ENCODE measurements at regions of chr3 and their contacts with region 1.

Region 1: DNA sequence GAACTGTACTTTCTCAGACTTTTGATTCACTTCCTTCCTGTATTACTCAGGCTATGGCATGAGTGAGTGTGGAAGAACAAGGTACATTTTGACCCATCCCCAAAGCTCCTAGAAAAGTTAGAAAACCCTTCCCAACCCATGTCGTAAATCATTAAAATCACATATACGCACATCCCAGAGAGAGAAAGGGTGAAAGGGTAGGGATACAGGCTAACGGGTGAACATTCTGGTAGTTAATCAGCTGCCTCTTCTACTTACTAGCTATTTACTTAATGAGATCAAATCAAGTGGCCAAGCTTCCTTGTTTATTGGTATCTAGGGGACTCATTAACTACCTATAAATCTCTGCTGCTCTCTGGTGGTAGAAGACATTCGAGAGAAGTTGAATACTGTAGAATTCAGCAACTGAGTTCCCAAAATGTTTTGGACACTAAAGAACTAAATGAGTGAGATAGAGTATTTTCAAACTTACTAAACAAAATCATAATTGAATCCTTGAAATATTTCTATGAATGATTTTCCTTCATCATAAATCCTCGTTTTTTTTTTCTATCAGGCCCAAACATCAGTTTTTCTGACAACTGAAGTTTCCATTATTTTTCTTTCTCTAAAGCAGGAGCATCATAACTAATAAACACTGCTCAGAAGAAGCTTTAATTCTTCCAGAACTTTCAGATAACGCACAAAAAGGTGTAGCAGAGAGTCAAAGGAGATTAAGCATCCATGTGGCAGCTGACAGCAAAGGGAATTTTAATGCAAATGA is 124.2 kb downstream of the IMPG2 start:
- DNase-seq: no peak
- H3K4me3 ChIP-seq: no peak overlapping the region
- H3K27ac ChIP-seq: no peak overlapping the region
- H3K4me1 ChIP-seq: peaks cover 0 to 3% of the 10 kb centered on the region in 2 donors
- H3K27me3 ChIP-seq: no peaks in the 10 kb centered on the region
- CTCF ChIP-seq: peak; percentile 15 to 92 (median 70)
- POLR2A ChIP-seq: no peak

Region 2: GRCh38 chr3:100737334-100737733 is 458.8 kb before region 1 on chr3:
- intact Hi-C with region 1: loop called (anchors 5 kb)
- DNase-seq: no peak
- H3K4me3 ChIP-seq: no peak overlapping the region
- H3K27ac ChIP-seq: peak overlapping the region in 2 of 3 donors; percentile 31 to 64
- H3K4me1 ChIP-seq: peaks cover 18 to 32% of the 10 kb centered on the region in 2 donors
- H3K27me3 ChIP-seq: no peaks in the 10 kb centered on the region
- CTCF ChIP-seq: peak in 4 of 6 experiments; percentile 37 to 61 (median 54)
- POLR2A ChIP-seq: no peak

Region 3: DNA sequence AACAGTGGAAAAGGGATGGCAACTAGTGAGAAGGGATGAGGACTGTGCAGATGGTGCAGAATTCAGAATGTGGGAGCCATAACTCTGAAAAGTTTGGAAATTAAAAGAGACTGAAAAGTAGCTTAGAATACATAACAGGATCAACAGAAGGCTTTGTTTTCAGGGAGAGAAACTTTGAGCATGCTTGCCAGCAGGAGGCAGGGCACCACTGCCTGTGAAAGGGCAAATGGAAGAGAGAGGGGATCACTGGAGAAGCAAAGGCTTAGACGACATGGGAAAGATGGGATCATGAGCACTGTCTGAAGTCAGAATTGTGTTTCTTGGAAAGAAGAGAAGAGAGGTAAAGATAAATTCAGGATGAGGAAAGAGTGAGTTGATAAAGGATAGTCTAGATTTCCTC is 302.5 kb before region 1 on chr3:
- intact Hi-C with region 1: loop called (anchors 5 kb)
- DNase-seq: peak; percentile 51 to 70
- H3K4me3 ChIP-seq: no peak overlapping the region
- H3K27ac ChIP-seq: no peak overlapping the region
- H3K4me1 ChIP-seq: peaks cover 8 to 9% of the 10 kb centered on the region in 2 donors
- H3K27me3 ChIP-seq: no peaks in the 10 kb centered on the region
- CTCF ChIP-seq: peak in 5 of 6 experiments; percentile 36 to 88 (median 66)
- POLR2A ChIP-seq: no peak

Region 4: GRCh38 chr3:101281521-101282030 is 85.4 kb after region 1 on chr3:
- intact Hi-C with region 1: no loop called
- DNase-seq: no peak
- H3K4me3 ChIP-seq: no peak overlapping the region
- H3K27ac ChIP-seq: no peak overlapping the region
- H3K4me1 ChIP-seq: no peaks in the 10 kb centered on the region
- H3K27me3 ChIP-seq: no peaks in the 10 kb centered on the region
- CTCF ChIP-seq: no peak
- POLR2A ChIP-seq: no peak

Region 5: DNA sequence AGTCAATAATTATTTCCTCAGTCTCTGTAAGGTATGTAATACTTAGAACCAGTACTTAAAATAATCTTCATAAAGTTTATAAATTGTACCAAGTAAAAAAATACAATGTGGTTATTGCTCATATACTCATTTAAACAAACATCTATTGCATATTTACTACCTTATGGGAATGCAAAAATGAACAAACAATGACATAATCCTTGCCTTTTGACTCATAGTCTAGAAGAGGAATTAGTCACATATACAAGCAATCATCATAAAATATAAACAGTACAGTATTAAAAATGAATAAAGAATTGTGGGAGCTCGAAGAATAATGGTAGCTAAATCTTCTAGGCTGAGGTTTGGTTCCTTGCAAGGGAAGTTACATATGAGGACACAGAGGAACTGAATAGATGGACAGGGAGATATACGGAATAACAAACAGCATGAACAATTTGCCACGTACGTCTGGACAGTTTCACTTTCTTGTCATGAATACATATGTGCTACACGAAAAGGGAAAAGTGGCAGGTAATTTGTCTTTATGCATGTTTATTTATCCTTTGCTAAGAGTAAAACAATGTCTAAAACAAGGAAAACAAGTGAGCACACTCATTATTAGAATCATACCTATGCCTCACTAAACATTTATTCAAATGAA is 107.1 kb after region 1 on chr3:
- intact Hi-C with region 1: no loop called
- DNase-seq: no peak
- H3K4me3 ChIP-seq: no peak overlapping the region
- H3K27ac ChIP-seq: no peak overlapping the region
- H3K4me1 ChIP-seq: no peaks in the 10 kb centered on the region
- H3K27me3 ChIP-seq: no peaks in the 10 kb centered on the region
- CTCF ChIP-seq: no peak
- POLR2A ChIP-seq: no peak

Region 6: GRCh38 chr3:101531473-101532086 is 335.4 kb after region 1 on chr3:
- intact Hi-C with region 1: no loop called
- DNase-seq: no peak
- H3K4me3 ChIP-seq: no peak overlapping the region
- H3K27ac ChIP-seq: no peak overlapping the region
- H3K4me1 ChIP-seq: no peaks in the 10 kb centered on the region
- H3K27me3 ChIP-seq: no peaks in the 10 kb centered on the region
- CTCF ChIP-seq: no peak
- POLR2A ChIP-seq: no peak